ENCODE measurements at regions of chr1 and their contacts with region 1.

Region 1: GRCh38 chr1:25204797-25205480 is 27.4 kb downstream of the SYF2 start:
- DNase-seq: no peak
- H3K4me3 Mint-ChIP-seq: no peak overlapping the region
- H3K27ac Mint-ChIP-seq: no peak overlapping the region
- H3K4me1 Mint-ChIP-seq: no peaks in the 10 kb centered on the region
- H3K27me3 Mint-ChIP-seq: peaks cover 26% of the 10 kb centered on the region

Region 2: DNA sequence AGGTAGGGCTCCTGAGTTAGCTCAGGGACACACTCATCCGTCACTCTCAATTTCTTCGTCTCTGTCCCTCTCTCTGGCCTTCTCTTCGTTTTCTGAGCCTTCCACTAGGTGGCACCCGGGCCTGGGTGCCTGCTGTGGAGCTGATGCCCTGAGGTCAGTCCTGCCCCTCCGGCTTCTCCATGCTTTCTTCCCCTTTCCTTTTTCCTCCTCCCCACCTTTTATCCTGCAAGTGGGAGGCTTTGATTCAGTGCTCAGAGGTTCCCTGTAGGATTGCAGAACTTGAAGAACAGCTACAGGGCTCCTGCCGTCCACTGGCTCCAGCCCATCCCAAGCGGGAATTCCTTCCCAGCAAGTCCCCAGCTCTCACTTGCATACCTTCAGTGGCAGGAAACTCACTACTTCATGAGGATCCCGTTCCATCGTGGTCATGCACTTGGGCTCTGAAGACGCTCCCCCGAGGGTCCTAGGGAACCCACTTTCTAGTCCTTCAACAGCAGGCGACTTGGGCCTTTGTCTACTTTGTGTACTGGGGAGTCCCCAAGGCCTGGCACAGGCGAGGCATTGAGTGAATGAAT is 516.2 kb before region 1 on chr1:
- intact Hi-C with region 1: loop called (anchors 5 kb)
- DNase-seq: peak; percentile 35
- H3K4me3 Mint-ChIP-seq: no peak overlapping the region
- H3K27ac Mint-ChIP-seq: no peak overlapping the region
- H3K4me1 Mint-ChIP-seq: no peaks in the 10 kb centered on the region
- H3K27me3 Mint-ChIP-seq: peaks cover 6% of the 10 kb centered on the region

Region 3: GRCh38 chr1:25117233-25117823 is 87.6 kb before region 1 on chr1:
- intact Hi-C with region 1: loop called (anchors 1 kb)
- DNase-seq: no peak
- H3K4me3 Mint-ChIP-seq: no peak overlapping the region
- H3K27ac Mint-ChIP-seq: no peak overlapping the region
- H3K4me1 Mint-ChIP-seq: peaks cover 23% of the 10 kb centered on the region
- H3K27me3 Mint-ChIP-seq: peaks cover 18% of the 10 kb centered on the region

Region 4: DNA sequence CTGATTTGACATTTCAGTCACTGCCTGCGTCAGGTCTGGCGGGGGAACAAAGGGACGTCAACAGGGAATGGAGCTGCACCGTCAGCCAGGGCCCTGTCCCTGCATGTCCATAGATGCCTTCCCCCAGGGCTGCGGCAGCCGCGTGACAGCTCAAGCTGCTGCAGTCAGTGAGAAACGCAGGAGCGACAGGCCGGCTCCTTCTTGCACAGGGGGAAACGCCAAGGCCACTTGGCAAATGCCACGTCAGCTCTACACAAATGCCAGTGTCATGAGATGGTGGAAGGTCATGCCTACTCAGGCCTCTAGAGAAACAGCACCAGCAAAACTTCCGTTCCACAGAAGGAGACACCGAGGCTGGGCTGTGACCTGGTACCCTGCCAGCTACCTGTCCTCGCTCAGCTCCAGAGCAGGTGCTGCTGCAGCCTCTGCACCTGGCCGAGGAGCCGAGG is 10.3 kb before region 1 on chr1:
- intact Hi-C with region 1: no loop called
- DNase-seq: no peak
- H3K4me3 Mint-ChIP-seq: no peak overlapping the region
- H3K27ac Mint-ChIP-seq: no peak overlapping the region
- H3K4me1 Mint-ChIP-seq: no peaks in the 10 kb centered on the region
- H3K27me3 Mint-ChIP-seq: peaks cover 18% of the 10 kb centered on the region